Heart right ventricle (tissue), 16 donors: ENCODE measurements at regions of chr1 and their contacts with region 1.

Region 1: DNA sequence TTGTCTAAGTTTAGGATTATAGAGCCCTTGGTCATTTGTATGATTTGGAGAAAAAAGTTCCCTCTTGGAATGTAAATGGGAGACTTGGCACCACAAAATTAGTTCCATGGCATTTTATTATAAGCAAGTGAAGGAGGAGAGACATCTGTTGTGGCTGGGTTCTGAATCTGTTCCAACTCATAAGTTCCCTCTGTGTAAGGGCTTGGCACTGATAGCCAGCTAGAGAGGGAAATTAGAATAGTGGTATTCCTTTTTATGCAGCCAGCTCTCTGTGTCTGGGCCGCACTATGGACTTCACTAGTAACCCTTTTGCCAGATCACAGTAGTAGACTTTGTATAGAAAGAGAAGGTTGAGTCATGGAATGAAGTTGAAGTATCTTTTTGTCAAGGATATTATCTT is 31.1 kb downstream of the GNAI3 start:
- DNase-seq: peak in 1 of 2 donors; percentile 19
- ATAC-seq: peak in 6 of 8 donors; percentile 48 to 86 (median 74)
- H3K4me3 ChIP-seq: no peak overlapping the region
- H3K27ac ChIP-seq: no peak overlapping the region
- H3K4me1 ChIP-seq: peaks cover 0 to 23% (median 11%) of the 10 kb centered on the region in 9 donors
- H3K27me3 ChIP-seq: no peaks in the 10 kb centered on the region
- CTCF ChIP-seq: no peak

Region 2: GRCh38 chr1:109548321-109549267 is 30.9 kb before region 1 on chr1 and contains the start of gene GNAI3:
- intact Hi-C with region 1: no loop called
- DNase-seq: peak; percentile 95 to 97
- ATAC-seq: peak; percentile 96 to 99 (median 98)
- H3K4me3 ChIP-seq: peak within 1 kb of the TSS; percentile 69 to 96 (median 88)
- H3K27ac ChIP-seq: peak within 1 kb of the TSS; percentile 61 to 98 (median 95)
- H3K4me1 ChIP-seq: peaks cover 0 to 62% (median 46%) of the 10 kb centered on the region in 9 donors
- H3K27me3 ChIP-seq: no peaks in the 10 kb centered on the region
- CTCF ChIP-seq: no peak
- total RNA-seq, gene GNAI3: 2.1 to 3.6 (median 2.8) TPM

Region 3: DNA sequence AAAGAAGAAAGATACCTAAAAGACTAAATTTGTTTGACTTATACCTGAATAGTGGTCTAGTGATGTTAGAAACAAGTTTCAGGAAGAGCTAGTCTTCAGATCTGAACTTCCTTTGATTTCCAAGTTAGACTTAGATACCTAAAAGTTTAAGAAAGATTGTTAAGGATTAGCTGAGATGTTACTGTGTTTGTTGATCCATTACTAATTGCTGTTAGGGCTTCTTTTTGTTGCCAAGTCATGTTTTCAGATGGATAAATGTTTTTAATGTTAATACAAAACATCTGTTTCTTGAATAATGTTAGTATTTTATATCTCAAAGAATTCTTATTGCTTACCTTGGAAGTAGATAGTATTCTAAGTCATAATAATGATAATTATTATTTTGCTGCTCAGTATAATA is 19.5 kb before region 1 on chr1:
- intact Hi-C with region 1: loop called in 1 of 10 experiments (anchors 2 kb)
- DNase-seq: no peak
- ATAC-seq: no peak
- H3K4me3 ChIP-seq: no peak overlapping the region
- H3K27ac ChIP-seq: no peak overlapping the region
- H3K4me1 ChIP-seq: peaks cover 0 to 91% (median 69%) of the 10 kb centered on the region in 9 donors
- H3K27me3 ChIP-seq: no peaks in the 10 kb centered on the region
- CTCF ChIP-seq: no peak

Region 4: DNA sequence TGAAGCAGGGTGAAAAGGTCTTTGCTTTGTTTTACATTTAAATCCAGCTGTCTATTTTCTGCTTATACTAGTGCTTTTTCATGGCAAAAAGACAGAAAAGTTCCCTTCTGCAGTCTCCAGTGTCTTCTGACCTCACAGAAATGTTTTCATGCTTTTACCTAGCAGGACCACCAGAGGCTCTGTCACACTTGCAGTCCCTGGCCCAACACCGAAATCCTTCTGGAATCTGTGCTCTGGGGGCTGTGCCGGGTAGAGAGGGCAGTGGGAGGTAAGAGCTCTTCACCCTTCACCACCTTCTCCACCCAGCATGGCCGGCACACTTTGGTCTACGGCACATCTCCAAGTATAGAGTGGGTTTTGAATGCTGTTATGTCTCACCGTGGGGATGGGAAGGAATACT is 19.2 kb after region 1 on chr1:
- intact Hi-C with region 1: no loop called
- DNase-seq: no peak
- ATAC-seq: no peak
- H3K4me3 ChIP-seq: no peak overlapping the region
- H3K27ac ChIP-seq: no peak overlapping the region
- H3K4me1 ChIP-seq: peaks cover 0 to 4% (median 0%) of the 10 kb centered on the region in 9 donors
- H3K27me3 ChIP-seq: no peaks in the 10 kb centered on the region
- CTCF ChIP-seq: no peak